Naive thymus-derived CD8-positive, alpha-beta T cell (primary cell): ENCODE measurements at regions of chr15 and their contacts with region 1.

Region 1: DNA sequence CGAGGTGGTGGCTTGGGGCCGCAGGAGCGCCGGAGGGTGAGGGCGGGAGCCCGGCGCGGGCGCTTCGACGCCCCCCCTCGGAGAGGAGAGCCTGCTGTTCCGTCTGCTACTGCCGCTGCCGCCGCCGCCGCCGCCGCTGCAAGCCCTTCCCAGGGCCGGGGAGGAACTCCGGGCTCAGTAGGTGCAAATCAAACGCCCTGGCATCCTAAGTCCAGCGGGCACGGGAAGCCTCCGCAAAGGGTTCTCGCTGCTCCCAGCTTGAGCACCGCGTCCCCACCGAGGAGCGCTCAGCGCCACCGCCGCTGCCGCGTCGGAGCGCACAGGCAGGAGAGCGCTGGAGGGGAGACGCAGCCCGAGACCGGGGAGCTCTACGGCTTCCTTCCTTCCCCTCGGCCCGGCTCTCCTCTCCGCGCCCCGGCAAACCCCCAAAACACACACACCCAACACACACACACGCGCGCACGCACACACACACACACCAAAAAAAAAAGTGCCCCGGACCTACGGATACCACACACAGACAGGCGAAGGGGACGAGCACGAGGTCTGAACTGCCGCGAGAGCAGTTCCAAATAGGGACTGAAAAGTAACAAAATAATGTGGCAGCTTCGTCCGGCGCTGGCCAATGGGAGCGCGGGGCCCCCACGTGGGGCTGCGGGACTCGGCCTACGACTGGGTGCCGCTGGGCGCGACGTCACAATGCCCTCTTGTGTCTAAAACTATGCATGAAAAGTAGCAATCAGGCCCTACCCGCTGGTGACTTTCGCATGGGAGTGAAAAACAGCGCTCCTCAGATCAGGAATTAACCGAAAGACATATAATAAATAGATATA is at the start of gene TLE3:
- DNase-seq: peak; percentile 96 to 99 (median 98)
- ATAC-seq: peak; percentile 56 to 70
- H3K4me3 Mint-ChIP-seq: peak within 1 kb of the TSS; percentile 89 to 100 (median 98)
- H3K27ac Mint-ChIP-seq: peak within 1 kb of the TSS; percentile 98 to 100 (median 98)
- H3K4me1 Mint-ChIP-seq: peaks cover 35 to 62% (median 52%) of the 10 kb centered on the region in 4 donors
- H3K27me3 Mint-ChIP-seq: peaks cover 0 to 4% (median 0%) of the 10 kb centered on the region in 5 donors
- polyA plus RNA-seq, gene TLE3: 9.9 to 32.6 (median 13.6) TPM

Region 2: GRCh38 chr15:69452692-69453521 is 644.6 kb before region 1 on chr15 and contains the start of gene RPLP1:
- POLR2A ChIA-PET with region 1: interaction called, 25 read pairs
- DNase-seq: peak; percentile 92 to 98 (median 96)
- ATAC-seq: peak; percentile 80 to 86
- H3K4me3 Mint-ChIP-seq: peak within 1 kb of the TSS; percentile 93 to 100 (median 98)
- H3K27ac Mint-ChIP-seq: peak within 1 kb of the TSS; percentile 95 to 100 (median 99)
- H3K4me1 Mint-ChIP-seq: peaks cover 28 to 51% (median 47%) of the 10 kb centered on the region in 4 donors
- H3K27me3 Mint-ChIP-seq: no peaks in the 10 kb centered on the region
- polyA plus RNA-seq, gene RPLP1: 2,364 to 3,349 (median 3,055) TPM

Region 3: DNA sequence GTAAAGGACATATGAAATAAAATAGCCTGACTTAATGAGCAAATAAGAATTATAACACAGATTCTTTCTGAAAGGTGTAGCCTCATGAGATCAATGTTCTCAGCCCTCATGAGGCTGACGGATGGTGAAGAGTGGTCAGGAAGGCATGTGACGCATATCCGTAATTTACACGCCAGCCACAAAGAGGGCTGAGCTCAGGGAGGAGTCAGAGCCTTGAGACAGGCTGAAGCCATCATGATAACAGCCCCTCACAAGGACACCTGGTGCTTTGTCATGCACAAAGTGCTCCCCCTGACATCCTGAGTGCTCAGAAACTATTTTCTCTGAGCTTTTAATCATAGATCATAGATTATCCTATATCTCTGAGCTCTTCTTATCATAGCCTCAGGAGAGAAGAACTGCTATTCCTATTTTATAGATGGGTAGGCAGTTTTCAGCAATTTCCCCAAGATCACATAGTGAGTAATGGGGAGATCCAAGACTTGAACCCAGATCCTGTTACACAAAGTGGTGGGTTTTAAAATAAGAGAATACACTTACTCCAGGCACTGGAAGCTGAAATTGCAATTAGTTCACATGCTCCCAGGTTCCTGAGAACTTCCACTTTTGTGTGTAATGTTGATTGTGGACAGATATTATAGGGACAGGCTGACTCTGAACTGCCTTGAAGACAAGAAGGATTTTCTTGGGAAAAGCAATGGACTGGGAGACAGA is 377.9 kb before region 1 on chr15:
- POLR2A ChIA-PET with region 1: interaction called, 38 read pairs
- DNase-seq: peak in 9 of 10 donors; percentile 35 to 82 (median 63)
- ATAC-seq: peak; percentile 83 to 89
- H3K4me3 Mint-ChIP-seq: peak overlapping the region in 9 of 10 donors; percentile 4 to 77 (median 33)
- H3K27ac Mint-ChIP-seq: peak overlapping the region; percentile 75 to 96 (median 88)
- H3K4me1 Mint-ChIP-seq: peaks cover 44 to 96% (median 87%) of the 10 kb centered on the region in 4 donors
- H3K27me3 Mint-ChIP-seq: no peaks in the 10 kb centered on the region

Region 4: DNA sequence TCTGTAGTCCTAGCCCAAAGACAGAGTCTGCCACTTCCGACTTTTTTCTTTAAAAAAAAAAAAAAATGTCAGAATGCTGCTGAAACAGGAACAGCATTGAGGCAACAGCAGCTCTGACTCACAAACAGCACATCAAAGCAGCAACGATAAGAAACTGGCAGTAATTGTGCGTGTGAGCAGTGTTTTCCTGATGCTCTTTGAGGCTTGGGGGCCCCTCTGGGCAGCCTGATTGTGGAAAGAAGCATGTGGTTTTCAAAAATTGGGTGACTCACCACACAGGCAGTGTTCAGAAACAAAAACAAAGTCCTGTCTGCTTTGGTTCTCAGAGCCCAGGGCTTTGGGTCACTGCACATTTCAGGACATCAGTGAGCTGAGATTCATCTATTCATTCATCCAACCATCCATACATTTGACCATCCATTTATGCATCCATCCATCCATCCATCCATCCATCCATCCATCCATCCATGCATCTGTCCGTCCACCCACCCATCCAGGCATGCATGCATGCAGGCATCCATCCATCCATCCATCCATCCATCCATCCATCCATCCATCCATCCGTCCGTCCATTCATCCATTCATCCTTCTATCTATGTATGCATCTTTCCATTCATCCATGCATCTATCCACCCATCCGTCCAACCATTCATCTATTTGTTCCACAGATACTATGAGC is 336.5 kb before region 1 on chr15:
- POLR2A ChIA-PET with region 1: interaction called, 138 read pairs
- DNase-seq: peak; percentile 35 to 92 (median 75)
- ATAC-seq: peak; percentile 71 to 76
- H3K4me3 Mint-ChIP-seq: peak overlapping the region; percentile 36 to 79 (median 68)
- H3K27ac Mint-ChIP-seq: peak overlapping the region; percentile 41 to 97 (median 82)
- H3K4me1 Mint-ChIP-seq: peaks cover 32 to 75% (median 64%) of the 10 kb centered on the region in 4 donors
- H3K27me3 Mint-ChIP-seq: peaks cover 0 to 8% (median 3%) of the 10 kb centered on the region in 5 donors

Region 5: DNA sequence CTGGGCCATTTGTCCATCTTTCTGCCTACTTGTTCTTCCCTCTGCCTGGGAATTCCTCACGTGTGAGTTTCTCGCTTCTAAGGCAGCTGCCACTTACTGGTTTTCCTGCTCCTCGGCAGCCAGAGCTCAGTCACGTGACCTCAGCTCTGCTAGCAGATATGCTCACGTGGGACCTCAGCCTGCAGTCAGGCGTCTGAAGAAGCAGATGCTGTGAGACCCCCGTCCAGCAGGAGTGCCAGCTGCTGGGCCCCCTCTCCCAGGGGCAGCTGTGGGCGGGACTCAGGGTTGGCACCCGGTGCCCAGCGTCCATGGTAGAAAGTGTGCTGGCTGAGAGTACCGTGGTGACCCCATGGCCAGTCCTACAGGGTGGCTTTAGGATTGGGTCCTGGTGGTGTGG is 161.5 kb after region 1 on chr15:
- POLR2A ChIA-PET with region 1: interaction called, 24 read pairs
- DNase-seq: peak in 9 of 10 donors; percentile 39 to 82 (median 59)
- ATAC-seq: peak; percentile 72 to 75
- H3K4me3 Mint-ChIP-seq: peak overlapping the region; percentile 67 to 90 (median 78)
- H3K27ac Mint-ChIP-seq: peak overlapping the region; percentile 78 to 95 (median 92)
- H3K4me1 Mint-ChIP-seq: peaks cover 55 to 78% (median 70%) of the 10 kb centered on the region in 4 donors
- H3K27me3 Mint-ChIP-seq: no peaks in the 10 kb centered on the region